ENCODE measurements at regions of chrX and their contacts with region 1.

Region 1: DNA sequence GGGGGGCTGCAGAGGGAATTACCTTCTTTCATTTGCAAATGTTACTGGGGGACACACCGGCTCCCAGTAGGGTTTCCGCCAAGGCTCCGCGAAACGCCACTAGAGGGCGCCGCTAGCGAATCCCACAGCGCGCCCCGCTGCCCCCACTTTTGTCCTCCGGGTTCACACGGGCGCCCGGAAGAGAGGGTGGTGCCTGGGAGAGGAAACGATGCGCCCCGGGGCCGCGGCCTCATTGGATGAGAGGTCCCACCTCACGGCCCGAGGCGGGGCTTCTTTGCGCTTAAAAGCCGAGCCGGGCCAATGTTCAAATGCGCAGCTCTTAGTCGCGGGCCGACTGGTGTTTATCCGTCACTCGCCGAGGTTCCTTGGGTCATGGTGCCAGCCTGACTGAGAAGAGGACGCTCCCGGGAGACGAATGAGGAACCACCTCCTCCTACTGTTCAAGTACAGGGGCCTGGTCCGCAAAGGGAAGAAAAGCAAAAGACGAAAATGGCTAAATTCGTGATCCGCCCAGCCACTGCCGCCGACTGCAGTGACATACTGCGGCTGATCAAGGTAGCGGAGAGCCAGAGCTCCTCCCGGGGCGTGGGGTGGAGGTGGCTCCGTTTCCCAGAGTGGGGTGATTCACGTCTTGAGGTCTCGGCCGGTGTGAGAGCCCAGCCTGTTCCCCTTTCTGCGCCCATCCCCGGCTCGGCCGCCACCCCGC is at the start of gene SAT1:
- DNase-seq: peak; percentile 96
- H3K4me3 Mint-ChIP-seq: peak within 1 kb of the TSS; percentile 81
- H3K27ac Mint-ChIP-seq: peak within 1 kb of the TSS; percentile 93
- H3K4me1 Mint-ChIP-seq: peaks cover 17% of the 10 kb centered on the region
- H3K27me3 Mint-ChIP-seq: no peaks in the 10 kb centered on the region
- CTCF ChIP-seq: peak; percentile 84
- total RNA-seq, gene SAT1: 419 and 426 TPM in 2 replicates

Region 2: GRCh38 chrX:23742697-23743622 is 40.1 kb before region 1 on chrX and contains the start of gene ACOT9:
- CTCF ChIA-PET with region 1: interaction called, 7 read pairs
- intact Hi-C with region 1: loop called (anchors 2 kb)
- DNase-seq: peak; percentile 91
- H3K4me3 Mint-ChIP-seq: peak within 1 kb of the TSS; percentile 67
- H3K27ac Mint-ChIP-seq: peak within 1 kb of the TSS; percentile 61
- H3K4me1 Mint-ChIP-seq: peaks cover 18% of the 10 kb centered on the region
- H3K27me3 Mint-ChIP-seq: no peaks in the 10 kb centered on the region
- CTCF ChIP-seq: no peak
- total RNA-seq, gene ACOT9: 38.1 and 49.6 TPM in 2 replicates

Region 3: GRCh38 chrX:23822397-23822796 is 39.4 kb after region 1 on chrX:
- CTCF ChIA-PET with region 1: interaction called, 3 read pairs
- intact Hi-C with region 1: loop called (anchors 5 kb)
- DNase-seq: peak; percentile 28
- H3K4me3 Mint-ChIP-seq: no peak overlapping the region
- H3K27ac Mint-ChIP-seq: peak overlapping the region; percentile 52
- H3K4me1 Mint-ChIP-seq: peaks cover 12% of the 10 kb centered on the region
- H3K27me3 Mint-ChIP-seq: no peaks in the 10 kb centered on the region
- CTCF ChIP-seq: no peak

Region 4: DNA sequence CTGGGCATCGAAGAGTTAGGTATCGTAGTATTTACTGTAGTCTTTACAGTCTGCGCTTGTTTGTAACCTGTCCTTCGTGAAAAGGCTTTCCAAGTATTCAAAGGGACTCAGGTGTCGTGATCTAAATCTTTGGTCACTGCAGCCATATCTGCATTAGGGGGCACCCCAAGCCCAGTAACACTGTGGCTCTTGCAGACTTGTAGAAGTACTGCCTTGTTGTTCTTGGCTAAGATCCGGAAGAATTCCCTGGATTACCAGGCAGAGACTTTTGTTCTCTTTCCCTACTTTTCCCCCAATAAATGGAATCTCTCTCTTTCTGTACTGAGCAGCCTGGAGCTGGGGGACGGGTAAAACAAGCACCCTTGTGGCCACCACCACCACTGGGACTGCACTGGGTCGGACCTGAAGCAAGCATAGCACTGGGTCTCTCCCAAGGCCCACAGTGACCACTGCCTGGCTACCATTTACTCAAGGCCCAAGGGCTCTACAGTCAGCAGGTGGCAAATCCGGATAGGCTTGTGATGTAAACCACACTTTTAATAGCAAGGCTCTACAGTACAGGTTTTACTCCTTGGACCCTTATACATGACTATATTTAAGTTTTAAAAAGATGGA is 136.8 kb after region 1 on chrX:
- CTCF ChIA-PET with region 1: no interaction called
- intact Hi-C with region 1: no loop called
- DNase-seq: peak; percentile 10
- H3K4me3 Mint-ChIP-seq: no peak overlapping the region
- H3K27ac Mint-ChIP-seq: no peak overlapping the region
- H3K4me1 Mint-ChIP-seq: no peaks in the 10 kb centered on the region
- H3K27me3 Mint-ChIP-seq: no peaks in the 10 kb centered on the region
- CTCF ChIP-seq: no peak

Measured in Calu3 (cell line).